Posterior vena cava (tissue), 2 donors: ENCODE measurements at regions of chr16 and their contacts with region 1.

Region 1: GRCh38 chr16:68040507-68041288 is 17.6 kb downstream of the DUS2 start:
- DNase-seq: peak; percentile 94

Region 2: DNA sequence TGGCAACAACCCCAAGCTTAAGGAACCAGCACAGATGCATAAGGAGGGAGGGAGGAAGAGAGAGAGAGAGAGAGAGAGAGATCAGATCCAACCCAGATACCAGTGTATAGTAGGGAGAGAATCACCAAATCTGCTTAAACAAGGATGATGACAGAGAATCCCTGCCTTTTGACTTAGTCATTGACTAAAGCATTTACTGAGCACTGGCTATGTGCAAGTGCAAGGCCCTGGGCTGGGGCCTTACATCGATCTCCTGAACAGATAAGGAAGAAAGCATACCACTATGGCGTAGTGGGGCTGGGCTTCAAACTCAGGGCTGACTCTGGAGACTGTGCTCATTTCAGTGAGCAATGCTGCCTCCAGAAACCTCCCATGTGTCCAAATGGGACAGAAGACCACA is 218.2 kb before region 1 on chr16:
- intact Hi-C with region 1: loop called in 1 of 2 experiments (anchors 10 kb)
- DNase-seq: no peak

Region 3: GRCh38 chr16:67993189-67994039 is 47.3 kb before region 1 on chr16:
- intact Hi-C with region 1: loop called in 1 of 2 experiments (anchors 5 kb)
- DNase-seq: peak; percentile 96